ENCODE measurements at regions of chr21 and their contacts with region 1.

Region 1: DNA sequence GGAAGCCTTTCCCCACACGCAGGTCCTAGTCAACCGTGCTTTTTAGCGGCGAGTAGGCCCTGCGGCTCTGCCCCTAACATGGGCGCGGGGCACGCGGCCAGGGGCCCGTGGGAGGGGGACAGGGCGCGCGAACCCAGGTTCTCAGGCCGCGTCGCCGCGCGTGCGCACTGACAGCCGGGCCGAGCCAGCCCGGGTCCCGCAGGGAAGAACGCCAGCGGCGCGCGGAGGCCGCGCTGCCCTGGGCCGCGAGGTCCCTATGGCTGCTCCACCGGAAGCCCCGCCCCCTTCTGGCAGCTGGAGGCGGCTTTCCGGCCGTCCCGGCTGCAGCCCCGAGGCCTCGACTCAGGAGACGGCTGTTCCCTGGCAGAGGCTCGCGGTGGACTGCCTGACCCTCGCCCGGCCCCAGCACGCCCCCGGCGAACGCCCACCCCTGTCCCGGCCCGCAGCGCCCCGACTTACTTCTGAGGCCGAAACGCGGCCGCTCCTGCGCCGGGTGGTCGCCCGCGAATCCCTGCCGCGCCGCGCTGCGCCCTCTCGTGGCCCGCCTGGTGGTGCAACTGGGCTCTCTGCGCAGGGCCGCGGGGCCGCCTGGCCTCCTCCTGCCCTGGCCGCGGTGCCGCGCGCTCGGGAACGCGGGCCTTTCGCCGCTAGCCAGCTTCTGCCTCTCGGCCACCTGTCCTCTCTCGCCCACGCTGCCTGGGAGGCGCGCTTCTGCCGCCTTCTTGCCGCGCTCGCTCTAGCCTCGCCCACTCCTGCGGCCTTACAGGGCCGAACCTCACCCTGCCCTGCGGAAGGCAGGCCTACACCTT is 16.6 kb upstream of the RIPPLY3 start:
- DNase-seq: peak; percentile 87
- H3K4me3 ChIP-seq: peak overlapping the region; percentile 55 to 66 (median 65)
- H3K27ac ChIP-seq: peak overlapping the region; percentile 78
- H3K4me1 ChIP-seq: peaks cover 13% of the 10 kb centered on the region
- H3K27me3 ChIP-seq: no peaks in the 10 kb centered on the region
- CTCF ChIP-seq: peak; percentile 48 to 57

Region 2: DNA sequence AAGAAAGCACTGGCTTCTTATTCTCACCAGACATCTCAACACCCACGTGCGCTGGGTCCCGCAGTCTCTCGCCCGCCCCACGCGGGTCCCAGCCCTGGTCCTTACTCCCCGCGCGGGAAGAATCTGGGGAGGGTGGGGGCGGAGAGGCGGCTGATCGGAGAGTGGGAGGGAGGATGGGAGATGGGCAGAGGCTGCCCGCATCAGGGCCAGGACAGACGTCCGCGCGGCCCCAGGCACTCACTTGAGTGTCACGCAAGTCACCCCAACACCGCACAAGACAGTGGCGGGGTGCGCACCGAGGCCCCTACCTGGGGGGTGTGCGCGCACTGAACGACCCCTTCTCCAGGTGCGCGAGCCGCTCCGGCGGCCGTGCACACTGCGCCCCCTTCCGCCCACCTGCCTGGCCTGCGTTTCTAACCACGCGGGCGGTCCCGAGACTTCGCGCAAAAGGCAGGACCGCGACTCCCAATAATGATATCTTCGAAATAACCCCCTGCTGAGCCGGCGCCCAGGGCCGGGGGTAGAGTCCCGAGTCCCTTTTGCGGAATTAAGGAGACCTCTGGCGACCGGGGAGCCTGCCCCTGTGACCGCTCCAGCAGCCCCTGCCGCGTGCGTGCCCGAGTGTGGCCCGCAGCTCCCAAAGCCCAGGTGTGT is 296.9 kb before region 1 on chr21:
- CTCF ChIA-PET with region 1: interaction called, 22 read pairs
- dilution Hi-C with region 1: no loop called
- in situ Hi-C with region 1: no loop called
- intact Hi-C with region 1: no loop called
- DNase-seq: no peak
- H3K4me3 ChIP-seq: no peak overlapping the region
- H3K27ac ChIP-seq: no peak overlapping the region
- H3K4me1 ChIP-seq: no peaks in the 10 kb centered on the region
- H3K27me3 ChIP-seq: peaks cover 72% of the 10 kb centered on the region
- CTCF ChIP-seq: no peak

Region 3: DNA sequence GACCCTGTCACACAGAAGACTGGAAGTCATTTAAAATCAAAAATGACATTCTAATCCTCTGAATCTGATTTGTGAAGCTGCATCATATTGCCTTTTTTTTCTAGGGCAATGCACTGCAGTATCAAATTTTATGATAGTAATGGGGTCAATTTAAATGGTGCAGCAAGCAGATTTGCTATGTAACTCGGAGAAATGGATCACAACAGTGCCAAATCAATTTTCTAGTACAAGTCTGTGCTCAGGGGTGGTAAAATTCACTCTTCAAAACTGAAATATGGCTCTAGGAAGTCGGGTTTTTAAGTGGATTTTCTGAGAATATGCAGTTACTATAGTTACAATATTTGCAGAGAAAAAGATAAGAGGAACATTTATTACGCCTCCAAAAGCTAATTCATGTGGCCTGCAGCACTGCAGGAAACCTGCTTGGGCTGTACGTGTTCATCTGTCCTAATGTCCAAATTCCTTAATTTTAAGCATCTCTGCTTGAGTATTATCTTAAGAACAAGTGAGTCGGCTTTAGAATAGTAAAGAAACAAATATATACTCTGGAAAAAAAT is 55.0 kb before region 1 on chr21:
- CTCF ChIA-PET with region 1: no interaction called
- dilution Hi-C with region 1: no loop called
- in situ Hi-C with region 1: no loop called
- intact Hi-C with region 1: loop called (anchors 1 kb)
- DNase-seq: no peak
- H3K4me3 ChIP-seq: no peak overlapping the region
- H3K27ac ChIP-seq: no peak overlapping the region
- H3K4me1 ChIP-seq: peaks cover under 1% of the 10 kb centered on the region
- H3K27me3 ChIP-seq: no peaks in the 10 kb centered on the region
- CTCF ChIP-seq: no peak

Region 4: DNA sequence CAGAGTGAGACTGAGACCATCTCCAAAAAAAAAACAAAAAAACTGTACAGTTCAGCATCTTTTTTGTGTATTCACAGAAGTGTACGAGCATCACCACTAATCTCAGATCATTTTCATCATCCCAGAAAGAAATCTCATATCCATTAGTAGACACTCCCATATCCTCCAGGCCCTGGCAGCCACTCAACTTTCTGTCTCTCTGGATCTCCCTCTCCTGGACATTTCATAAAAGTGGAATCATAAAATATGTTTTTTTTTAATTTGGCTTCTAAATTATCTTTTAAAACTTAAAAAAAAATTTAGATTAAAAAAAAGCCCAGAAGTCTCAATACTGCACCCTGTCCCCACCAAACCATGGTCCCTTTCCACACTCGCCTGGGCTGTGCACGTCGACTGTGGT is 38.7 kb after region 1 on chr21:
- CTCF ChIA-PET with region 1: no interaction called
- dilution Hi-C with region 1: no loop called
- in situ Hi-C with region 1: no loop called
- intact Hi-C with region 1: no loop called
- DNase-seq: no peak
- H3K4me3 ChIP-seq: no peak overlapping the region
- H3K27ac ChIP-seq: no peak overlapping the region
- H3K4me1 ChIP-seq: peaks cover 19% of the 10 kb centered on the region
- H3K27me3 ChIP-seq: no peaks in the 10 kb centered on the region
- CTCF ChIP-seq: peak in 1 of 2 donors; percentile 15

Region 5: DNA sequence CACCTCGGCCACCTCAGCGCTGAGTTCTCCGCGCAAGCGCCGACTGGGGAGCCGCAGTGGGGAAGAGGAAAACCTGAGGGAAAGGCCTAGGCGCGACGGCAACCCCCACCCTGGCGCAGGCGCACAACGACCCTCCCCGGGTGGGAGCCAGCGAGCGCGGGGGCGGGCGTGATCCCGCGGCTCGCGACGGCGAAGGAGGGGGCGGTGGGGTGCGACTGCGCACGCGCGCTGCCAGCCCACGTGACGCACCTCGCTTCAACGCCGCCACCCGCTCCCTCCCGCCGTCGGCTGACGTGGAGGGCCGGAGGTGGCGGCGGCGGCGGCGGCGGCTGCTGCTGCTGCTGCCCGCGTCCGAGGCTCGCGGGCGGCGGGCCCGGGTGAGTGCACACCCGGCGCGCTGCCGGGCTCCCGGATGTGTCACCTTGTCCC is 83.1 kb after region 1 on chr21 and contains the starts of genes PIGP and TTC3:
- CTCF ChIA-PET with region 1: no interaction called
- dilution Hi-C with region 1: no loop called
- in situ Hi-C with region 1: no loop called
- intact Hi-C with region 1: loop called (anchors 5 kb)
- DNase-seq: peak; percentile 94
- H3K4me3 ChIP-seq: peak within 1 kb of the TSS; percentile 54 to 97 (median 96)
- H3K27ac ChIP-seq: peak within 1 kb of the TSS; percentile 77
- H3K4me1 ChIP-seq: peaks cover 14% of the 10 kb centered on the region
- H3K27me3 ChIP-seq: no peaks in the 10 kb centered on the region
- CTCF ChIP-seq: no peak
- total RNA-seq, gene PIGP: 5.7 to 19.1 TPM
- total RNA-seq, gene TTC3: 86.7 to 161 TPM